Right ventricle myocardium inferior (tissue), 1 donor: ENCODE measurements at regions of chr2 and their contacts with region 1.

Region 1: GRCh38 chr2:25376750-25377621 is 35.3 kb upstream of the DNMT3A start:
- DNase-seq: peak; percentile 90
- ATAC-seq: peak; percentile 98

Region 2: GRCh38 chr2:25314514-25315315 is 62.3 kb before region 1 on chr2:
- intact Hi-C with region 1: loop called (anchors 5 kb)
- DNase-seq: no peak
- ATAC-seq: peak; percentile 49

Region 3: GRCh38 chr2:25362049-25362433 is 14.9 kb before region 1 on chr2:
- intact Hi-C with region 1: loop called (anchors 2 kb)
- DNase-seq: peak; percentile 96
- ATAC-seq: peak; percentile 98

Region 4: DNA sequence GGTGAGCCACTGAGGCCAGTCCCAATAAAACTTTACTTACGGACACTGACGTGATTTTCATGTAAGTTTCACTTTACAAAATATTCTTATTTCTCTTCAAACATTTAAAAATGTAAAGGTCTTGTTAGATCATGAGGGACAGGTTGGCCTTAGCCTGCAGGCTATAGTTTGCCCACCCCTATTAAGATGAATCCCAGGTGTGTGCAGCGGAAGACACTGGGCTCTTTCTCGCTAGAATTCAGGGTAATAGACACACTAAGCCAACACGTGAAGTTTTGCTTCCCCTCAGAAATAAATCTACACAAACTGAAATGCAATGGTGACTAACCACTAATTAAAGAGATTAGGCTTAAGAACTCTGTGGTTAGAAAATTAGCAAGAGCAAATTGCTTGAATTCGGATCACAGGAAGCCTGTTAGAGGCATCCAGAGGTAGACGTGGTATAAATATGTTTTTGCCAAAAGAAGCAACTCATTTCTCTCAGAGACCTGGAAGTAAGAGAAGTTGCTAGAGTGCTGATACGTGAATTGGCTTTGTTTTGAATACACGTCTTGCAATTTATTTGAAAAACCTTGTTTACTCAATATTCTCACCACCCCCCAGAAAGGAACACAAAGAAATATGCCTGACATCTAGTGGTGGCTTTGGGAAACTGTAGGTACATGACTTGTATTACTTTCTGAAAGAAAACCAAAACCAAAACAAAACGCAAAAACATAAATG is 144.8 kb after region 1 on chr2:
- intact Hi-C with region 1: loop called (anchors 10 kb)
- DNase-seq: no peak
- ATAC-seq: peak; percentile 50